Head of caudate nucleus (tissue), 42 donors: ENCODE measurements at regions of chr3 and their contacts with region 1.

Region 1: DNA sequence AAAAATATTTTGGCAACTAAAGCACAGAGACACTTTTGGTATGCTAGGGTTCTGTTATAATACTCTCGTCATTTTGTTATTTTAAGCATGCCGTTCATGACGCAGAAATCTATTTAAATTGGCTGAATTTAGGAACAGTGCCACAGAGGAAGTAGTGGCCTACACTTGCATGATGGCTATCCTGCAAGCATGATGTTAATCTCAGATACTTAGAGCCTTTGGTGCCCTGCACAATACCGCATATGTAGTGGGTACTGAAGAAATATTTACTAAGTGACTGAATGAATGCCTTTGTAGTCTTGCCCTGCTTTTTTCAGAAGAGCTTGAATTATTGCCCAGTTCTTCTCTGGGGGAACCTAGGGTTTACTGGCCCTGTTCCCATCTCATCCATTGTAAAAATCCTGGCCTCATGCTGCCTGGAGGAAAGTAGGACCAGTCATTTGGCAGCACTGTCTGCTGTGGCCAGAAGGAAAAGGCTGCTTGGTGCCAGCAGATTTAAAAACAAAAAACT is 79.0 kb downstream of the SERPINI1 start:
- DNase-seq: peak in 39 of 42 donors; percentile 20 to 88 (median 67)

Region 2: GRCh38 chr3:167734498-167735232 is 79.8 kb before region 1 on chr3 and contains the start of gene PDCD10:
- intact Hi-C with region 1: loop called (anchors 5 kb)
- DNase-seq: peak; percentile 95 to 100 (median 99)